Activated naive CD4-positive, alpha-beta T cell treated with anti-CD3 and anti-CD28 coated beads, Interleukin-2, amount 10 ng/mL, durations not matched to agents 7 days and 5 days (primary cell): ENCODE measurements at regions of chr9 and their contacts with region 1.

Region 1: GRCh38 chr9:127199001-127199791 is 65.4 kb upstream of the GARNL3 start:
- DNase-seq: peak; percentile 87
- H3K4me3 Mint-ChIP-seq: no peak overlapping the region
- H3K27ac Mint-ChIP-seq: no peak overlapping the region
- H3K4me1 Mint-ChIP-seq: peaks cover 12% of the 10 kb centered on the region
- H3K27me3 Mint-ChIP-seq: peaks cover 47% of the 10 kb centered on the region

Region 2: DNA sequence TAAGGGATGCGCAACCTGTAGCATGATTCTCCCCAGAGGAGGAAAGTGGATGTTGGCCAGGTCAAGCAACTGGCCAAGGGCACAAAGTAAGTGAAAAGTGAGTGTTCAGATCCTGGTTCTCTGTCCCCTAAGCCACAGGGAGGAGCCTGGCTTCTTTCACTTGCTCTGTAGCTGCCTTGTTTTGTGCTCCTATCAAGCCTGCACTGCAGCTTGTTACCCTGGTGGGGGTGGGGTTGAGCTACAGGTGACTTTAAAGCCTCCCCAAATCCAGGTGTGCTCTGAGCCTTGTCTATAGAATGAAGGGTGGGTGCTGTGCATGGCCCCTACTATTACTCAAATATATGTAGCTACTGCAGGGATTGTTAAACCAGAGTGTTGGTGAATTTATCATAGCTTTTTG is 251.7 kb before region 1 on chr9:
- CTCF ChIA-PET with region 1: interaction called, 132 read pairs
- DNase-seq: peak; percentile 39
- H3K4me3 Mint-ChIP-seq: no peak overlapping the region
- H3K27ac Mint-ChIP-seq: no peak overlapping the region
- H3K4me1 Mint-ChIP-seq: no peaks in the 10 kb centered on the region
- H3K27me3 Mint-ChIP-seq: peaks cover 45% of the 10 kb centered on the region

Region 3: GRCh38 chr9:126965541-126966428 is 233.4 kb before region 1 on chr9:
- CTCF ChIA-PET with region 1: interaction called, 52 read pairs
- DNase-seq: peak; percentile 65
- H3K4me3 Mint-ChIP-seq: no peak overlapping the region
- H3K27ac Mint-ChIP-seq: no peak overlapping the region
- H3K4me1 Mint-ChIP-seq: peaks cover 3% of the 10 kb centered on the region
- H3K27me3 Mint-ChIP-seq: peaks cover 28% of the 10 kb centered on the region

Region 4: GRCh38 chr9:126985870-126986498 is 213.2 kb before region 1 on chr9:
- CTCF ChIA-PET with region 1: interaction called, 10 read pairs
- DNase-seq: peak; percentile 89
- H3K4me3 Mint-ChIP-seq: peak overlapping the region; percentile 40
- H3K27ac Mint-ChIP-seq: peak overlapping the region; percentile 90
- H3K4me1 Mint-ChIP-seq: peaks cover 50% of the 10 kb centered on the region
- H3K27me3 Mint-ChIP-seq: peaks cover 63% of the 10 kb centered on the region

Region 5: DNA sequence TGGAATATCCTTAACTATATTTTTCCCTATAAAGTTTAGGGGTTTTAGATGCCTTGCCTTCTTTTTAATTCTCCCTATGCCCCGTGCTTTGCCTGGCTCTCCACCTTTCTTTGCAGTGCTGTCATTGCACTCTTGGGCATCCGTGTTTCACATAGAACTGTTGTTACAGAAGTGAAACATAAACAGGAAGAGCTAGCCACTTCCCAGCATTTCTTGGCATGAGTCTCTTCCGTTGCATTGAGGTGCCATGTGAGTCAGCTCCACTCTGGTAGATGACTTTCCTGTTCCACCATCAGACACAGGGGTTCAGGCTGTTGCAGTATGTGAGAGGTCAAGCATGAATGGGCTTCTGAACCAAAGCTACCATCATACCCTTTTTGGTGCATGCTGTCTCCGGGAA is 150.2 kb before region 1 on chr9:
- CTCF ChIA-PET with region 1: interaction called, 11 read pairs
- DNase-seq: peak; percentile 50
- H3K4me3 Mint-ChIP-seq: peak overlapping the region; percentile 58
- H3K27ac Mint-ChIP-seq: peak overlapping the region; percentile 56
- H3K4me1 Mint-ChIP-seq: peaks cover 41% of the 10 kb centered on the region
- H3K27me3 Mint-ChIP-seq: peaks cover 3% of the 10 kb centered on the region